T-cell (primary cell): ENCODE measurements at regions of chr11 and their contacts with region 1.

Region 1: DNA sequence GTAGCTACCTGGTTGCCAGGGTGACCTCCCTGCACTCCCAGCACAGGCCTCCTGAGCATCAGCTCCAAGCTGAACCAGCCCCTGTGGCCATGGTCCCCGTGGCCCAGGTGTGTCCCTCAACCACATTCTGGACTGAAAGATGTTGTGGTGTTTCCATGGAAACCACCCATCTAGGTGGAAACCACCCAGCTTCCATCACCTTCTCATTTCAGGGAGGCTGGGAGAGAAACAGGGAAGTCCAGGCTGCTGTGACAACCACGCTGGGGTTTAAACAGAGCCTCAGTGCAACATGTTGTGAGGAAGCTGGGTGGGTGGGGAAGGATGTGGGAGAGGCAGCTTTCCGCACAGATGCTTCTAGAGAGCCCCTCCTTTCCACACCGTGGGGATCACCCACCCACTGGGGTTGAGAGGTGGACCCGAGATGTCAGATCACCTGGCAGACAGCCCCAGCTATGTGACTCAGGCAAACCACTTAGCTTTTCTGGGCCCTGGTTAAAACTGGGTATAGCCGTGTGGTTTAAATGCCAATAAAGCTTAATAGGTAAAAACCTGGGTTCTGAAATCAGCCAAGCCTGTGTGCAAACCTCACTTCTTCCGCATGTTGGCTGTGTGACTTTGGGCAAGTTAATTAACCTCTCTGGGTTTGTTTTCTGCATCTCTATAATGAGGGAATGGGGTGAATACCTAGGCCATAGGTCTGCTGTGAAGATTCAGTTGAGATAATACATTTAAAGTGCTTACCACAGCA is 46.4 kb downstream of the CD82 start:
- DNase-seq: peak; percentile 44 to 80 (median 64)
- ATAC-seq: peak; percentile 84 to 86 (median 84)
- H3K4me3 ChIP-seq: no peak overlapping the region
- H3K4me3 Mint-ChIP-seq: peak overlapping the region in 2 of 3 donors; percentile 2 to 63
- H3K27ac ChIP-seq: peak overlapping the region; percentile 83
- H3K27ac Mint-ChIP-seq: peak overlapping the region; percentile 79 to 92
- H3K4me1 ChIP-seq: peaks cover 47 to 84% of the 10 kb centered on the region in 2 experiments
- H3K4me1 Mint-ChIP-seq: peaks cover 69 to 96% (median 79%) of the 10 kb centered on the region in 3 donors
- H3K27me3 ChIP-seq: no peaks in the 10 kb centered on the region
- H3K27me3 Mint-ChIP-seq: no peaks in the 10 kb centered on the region

Region 2: DNA sequence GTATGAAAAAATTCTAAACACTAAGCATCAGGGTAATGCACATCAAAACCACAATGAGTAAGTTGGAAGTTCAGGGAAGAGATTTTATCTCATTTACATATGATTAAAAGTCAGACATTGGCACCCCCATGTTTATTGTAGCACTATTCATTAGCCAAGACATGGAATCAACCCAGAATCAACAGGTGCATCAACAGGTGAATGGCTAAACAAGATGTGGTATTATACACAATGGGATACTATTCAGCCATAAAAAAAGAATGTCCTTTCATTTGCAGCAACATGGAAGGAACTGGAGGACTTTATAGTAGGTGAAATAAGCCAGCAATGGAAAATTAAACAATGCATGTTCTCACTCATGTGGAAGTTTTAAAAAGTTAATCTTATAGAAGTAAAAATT is 1270.7 kb before region 1 on chr11:
- CTCF ChIA-PET with region 1: no interaction called
- POLR2A ChIA-PET with region 1: interaction called in 1 of 2 experiments, 10 read pairs
- DNase-seq: no peak
- ATAC-seq: no peak
- H3K4me3 ChIP-seq: no peak overlapping the region
- H3K4me3 Mint-ChIP-seq: no peak overlapping the region
- H3K27ac ChIP-seq: no peak overlapping the region
- H3K27ac Mint-ChIP-seq: peak overlapping the region in 1 of 2 donors; percentile 46
- H3K4me1 ChIP-seq: no peaks in the 10 kb centered on the region
- H3K4me1 Mint-ChIP-seq: no peaks in the 10 kb centered on the region
- H3K27me3 ChIP-seq: no peaks in the 10 kb centered on the region
- H3K27me3 Mint-ChIP-seq: no peaks in the 10 kb centered on the region

Region 3: DNA sequence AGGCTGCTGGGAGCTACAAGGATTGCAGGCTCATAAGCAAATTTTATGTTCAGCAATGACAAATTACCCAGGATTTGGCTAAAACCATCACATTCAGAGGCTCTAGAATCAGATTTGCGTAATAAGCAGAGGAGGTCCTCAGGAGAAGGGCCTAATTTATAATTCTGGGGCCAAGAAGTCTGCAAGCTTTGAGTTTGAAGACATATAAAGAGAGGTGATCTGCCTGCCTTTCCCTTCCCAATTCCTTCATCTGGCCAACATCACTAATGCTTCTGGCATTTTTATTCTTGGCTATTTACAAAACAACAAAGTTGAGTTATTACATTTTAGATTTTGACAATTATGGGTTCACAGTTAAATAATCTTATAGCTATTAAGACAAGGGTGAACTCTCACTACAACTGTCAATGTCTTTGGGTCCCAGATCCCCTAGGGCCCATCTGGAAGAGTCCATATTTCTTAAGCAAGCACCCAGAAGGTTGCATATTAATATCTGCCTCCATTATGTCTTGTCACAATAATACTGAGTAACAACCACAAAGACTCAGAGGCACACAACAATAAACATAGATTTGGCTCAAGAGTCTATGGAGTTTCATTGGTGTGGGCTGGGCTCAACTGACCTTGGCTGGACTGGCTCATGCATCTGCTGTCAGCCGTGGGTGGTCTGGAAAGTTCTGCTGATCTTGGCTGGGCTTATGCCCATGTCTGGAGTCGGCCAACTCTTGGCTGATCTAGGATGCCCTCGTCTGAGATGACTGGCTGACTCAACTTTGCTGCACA is 113.6 kb before region 1 on chr11:
- CTCF ChIA-PET with region 1: no interaction called
- POLR2A ChIA-PET with region 1: no interaction called
- DNase-seq: no peak
- ATAC-seq: no peak
- H3K4me3 ChIP-seq: no peak overlapping the region
- H3K4me3 Mint-ChIP-seq: no peak overlapping the region
- H3K27ac ChIP-seq: no peak overlapping the region
- H3K27ac Mint-ChIP-seq: no peak overlapping the region
- H3K4me1 ChIP-seq: no peaks in the 10 kb centered on the region
- H3K4me1 Mint-ChIP-seq: no peaks in the 10 kb centered on the region
- H3K27me3 ChIP-seq: peaks cover 0 to 15% of the 10 kb centered on the region in 2 experiments
- H3K27me3 Mint-ChIP-seq: peaks cover 12 to 25% of the 10 kb centered on the region in 2 donors

Region 4: GRCh38 chr11:44556735-44557409 is 55.0 kb before region 1 on chr11:
- CTCF ChIA-PET with region 1: interaction called, 24 to 28 read pairs
- POLR2A ChIA-PET with region 1: interaction called in 1 of 2 experiments, 4 read pairs
- DNase-seq: peak in 34 of 35 experiments; percentile 24 to 83 (median 61)
- ATAC-seq: peak; percentile 71 to 85 (median 76)
- H3K4me3 ChIP-seq: no peak overlapping the region
- H3K4me3 Mint-ChIP-seq: no peak overlapping the region
- H3K27ac ChIP-seq: no peak overlapping the region
- H3K27ac Mint-ChIP-seq: peak overlapping the region; percentile 66 to 83
- H3K4me1 ChIP-seq: peaks cover 8 to 19% of the 10 kb centered on the region in 2 experiments
- H3K4me1 Mint-ChIP-seq: peaks cover 13 to 35% (median 19%) of the 10 kb centered on the region in 3 donors
- H3K27me3 ChIP-seq: no peaks in the 10 kb centered on the region
- H3K27me3 Mint-ChIP-seq: no peaks in the 10 kb centered on the region

Region 5: GRCh38 chr11:44565211-44565952 is 46.5 kb before region 1 on chr11 and contains the start of gene CD82:
- CTCF ChIA-PET with region 1: interaction called, 3 to 16 read pairs
- POLR2A ChIA-PET with region 1: interaction called in 1 of 2 experiments, 5 read pairs
- DNase-seq: peak; percentile 78 to 98 (median 87)
- ATAC-seq: peak; percentile 81 to 84 (median 83)
- H3K4me3 ChIP-seq: peak within 1 kb of the TSS; percentile 85 to 89
- H3K4me3 Mint-ChIP-seq: peak within 1 kb of the TSS; percentile 81 to 88 (median 83)
- H3K27ac ChIP-seq: peak within 1 kb of the TSS; percentile 82
- H3K27ac Mint-ChIP-seq: peak within 1 kb of the TSS; percentile 80 to 81
- H3K4me1 ChIP-seq: peaks cover 38 to 58% of the 10 kb centered on the region in 2 experiments
- H3K4me1 Mint-ChIP-seq: peaks cover 39 to 60% (median 46%) of the 10 kb centered on the region in 3 donors
- H3K27me3 ChIP-seq: no peaks in the 10 kb centered on the region
- H3K27me3 Mint-ChIP-seq: no peaks in the 10 kb centered on the region
- total RNA-seq, gene CD82: 53.4 to 99.6 (median 69.0) TPM

Region 6: GRCh38 chr11:44658506-44658850 is 46.6 kb after region 1 on chr11:
- CTCF ChIA-PET with region 1: no interaction called
- POLR2A ChIA-PET with region 1: no interaction called
- DNase-seq: peak in 16 of 35 experiments; percentile 5 to 54 (median 16)
- ATAC-seq: peak in 2 of 4 experiments; percentile 42 to 47
- H3K4me3 ChIP-seq: no peak overlapping the region
- H3K4me3 Mint-ChIP-seq: no peak overlapping the region
- H3K27ac ChIP-seq: no peak overlapping the region
- H3K27ac Mint-ChIP-seq: no peak overlapping the region
- H3K4me1 ChIP-seq: peaks cover 0 to 14% of the 10 kb centered on the region in 2 experiments
- H3K4me1 Mint-ChIP-seq: peaks cover 27 to 36% (median 31%) of the 10 kb centered on the region in 3 donors
- H3K27me3 ChIP-seq: peaks cover 0 to 27% of the 10 kb centered on the region in 2 experiments
- H3K27me3 Mint-ChIP-seq: peaks cover 0 to 7% of the 10 kb centered on the region in 2 donors